Left ventricle myocardium superior (tissue), 1 donor: ENCODE measurements at regions of chr17 and their contacts with region 1.

Region 1: DNA sequence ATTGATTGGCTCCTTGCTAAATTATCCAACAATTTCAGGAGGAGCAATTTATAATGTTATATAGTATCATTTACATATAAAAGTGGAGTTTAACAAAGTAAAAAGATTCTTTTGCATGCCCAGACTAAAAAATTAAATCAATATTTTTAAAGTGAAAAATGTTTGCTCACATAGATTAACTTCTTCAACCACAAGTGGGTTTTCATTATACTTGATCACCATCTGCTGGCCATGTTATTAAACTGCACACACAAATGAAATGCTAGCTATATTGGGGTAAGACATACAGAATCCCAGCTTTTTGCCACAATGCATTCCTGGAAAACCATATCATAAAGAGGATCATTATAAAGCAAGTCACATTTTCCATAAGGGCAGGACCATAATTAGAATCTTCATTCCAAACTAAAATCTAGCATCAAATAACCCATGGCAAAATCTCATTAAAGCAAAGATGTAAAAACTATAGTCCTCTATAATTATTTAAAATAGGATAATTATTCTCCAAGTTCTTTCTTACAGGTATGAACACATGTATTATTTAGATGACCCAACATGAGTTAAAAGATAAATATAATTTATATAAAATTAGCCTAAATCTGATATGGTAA is 26.3 kb downstream of the CEP112 start:
- DNase-seq: no peak
- ATAC-seq: no peak

Region 2: GRCh38 chr17:65231662-65232335 is 933.8 kb before region 1 on chr17:
- intact Hi-C with region 1: loop called (anchors 5 kb)
- DNase-seq: no peak
- ATAC-seq: peak; percentile 79

Region 3: GRCh38 chr17:65294179-65294720 is 871.4 kb before region 1 on chr17:
- intact Hi-C with region 1: loop called (anchors 5 kb)
- DNase-seq: peak; percentile 57
- ATAC-seq: peak; percentile 91

Region 4: GRCh38 chr17:66290101-66290722 is 124.6 kb after region 1 on chr17:
- intact Hi-C with region 1: no loop called
- DNase-seq: no peak
- ATAC-seq: no peak